Colonic mucosa (tissue), 4 donors: ENCODE measurements at regions of chr7 and their contacts with region 1.

Region 1: DNA sequence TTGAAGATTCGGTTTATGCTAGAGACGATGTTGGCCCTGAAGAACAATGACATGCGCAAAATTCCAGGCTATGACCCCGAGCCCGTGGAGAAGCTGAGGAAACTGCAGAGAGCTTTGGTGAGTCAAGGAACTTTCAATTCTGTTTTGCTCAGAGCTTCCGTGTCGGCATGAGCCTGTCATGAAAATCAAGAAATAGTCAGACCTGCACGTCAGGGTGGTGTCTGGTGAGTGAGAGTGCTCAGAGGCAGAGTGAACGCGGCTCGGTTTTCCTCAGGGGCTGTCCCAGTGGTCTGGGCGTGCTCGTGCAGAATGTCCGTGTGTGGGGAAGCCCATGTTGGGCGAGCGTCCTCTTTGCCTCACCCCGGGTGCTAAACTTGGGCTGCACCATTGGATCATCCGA is 12.6 kb downstream of the NOM1 start:
- DNase-seq: no peak
- H3K4me3 ChIP-seq: no peak overlapping the region
- H3K27ac ChIP-seq: no peak overlapping the region
- H3K4me1 ChIP-seq: no peaks in the 10 kb centered on the region
- H3K27me3 ChIP-seq: no peaks in the 10 kb centered on the region
- CTCF ChIP-seq: no peak

Region 2: DNA sequence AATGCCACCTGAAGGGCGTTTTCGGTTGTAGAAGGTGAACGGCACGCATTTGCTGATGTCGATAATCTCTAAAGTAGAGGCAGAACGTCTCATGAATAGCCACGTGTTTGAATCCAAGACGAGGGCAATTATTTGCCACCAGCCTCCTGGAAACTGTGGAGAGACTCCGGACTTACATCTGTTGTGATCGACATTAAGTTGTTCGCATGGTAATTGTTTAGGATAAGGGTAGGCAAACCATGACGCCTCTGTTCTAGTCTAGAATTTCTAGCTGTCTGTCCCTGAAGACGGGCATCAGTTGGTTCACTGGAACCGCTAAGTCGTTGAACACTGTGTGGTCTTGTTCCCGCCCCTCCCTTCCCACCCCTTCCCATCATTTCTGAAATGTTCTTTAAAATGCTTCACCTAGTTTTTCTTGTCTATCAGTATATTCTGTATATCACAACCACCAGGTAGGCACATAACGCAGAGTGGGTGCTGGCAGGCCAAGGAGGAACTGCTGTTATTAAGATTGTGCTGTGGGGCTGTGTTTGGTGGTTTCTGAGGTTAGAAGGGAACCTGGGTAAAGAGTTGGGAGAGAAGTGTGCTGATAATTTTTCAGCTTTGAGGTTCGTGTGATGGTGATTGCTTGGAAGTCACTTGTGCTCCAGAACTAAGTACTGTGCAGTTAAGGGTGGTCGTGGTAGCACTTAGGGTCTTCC is 177.8 kb after region 1 on chr7:
- intact Hi-C with region 1: loop called (anchors 5 kb)
- DNase-seq: no peak
- H3K4me3 ChIP-seq: peak overlapping the region; percentile 86
- H3K27ac ChIP-seq: peak overlapping the region; percentile 90
- H3K4me1 ChIP-seq: peaks cover 5% of the 10 kb centered on the region
- H3K27me3 ChIP-seq: no peaks in the 10 kb centered on the region
- CTCF ChIP-seq: no peak